ENCODE measurements at regions of chr9 and their contacts with region 1.

Region 1: DNA sequence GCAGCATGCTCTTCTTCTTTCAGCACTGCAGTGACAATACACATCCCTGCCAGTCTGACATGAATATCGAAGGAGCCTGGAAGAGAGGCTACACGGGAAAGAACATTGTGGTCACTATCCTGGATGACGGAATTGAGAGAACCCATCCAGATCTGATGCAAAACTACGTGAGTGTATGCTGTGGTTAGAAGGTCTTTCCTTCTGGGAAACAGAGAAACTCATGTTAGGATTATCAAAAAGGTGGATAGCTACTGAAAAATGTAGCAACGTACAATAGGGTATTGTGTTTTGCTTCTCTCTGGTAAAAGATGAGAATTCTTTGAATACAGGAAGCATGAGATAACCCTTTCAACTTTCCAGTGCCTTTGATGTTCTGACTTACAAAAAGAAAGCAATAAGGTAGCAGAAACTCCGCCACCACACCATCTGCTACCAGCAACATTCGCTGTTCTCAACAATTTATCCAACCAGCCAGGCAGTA is 133.3 kb downstream of the PCSK5 start:
- DNase-seq: no peak
- H3K4me3 ChIP-seq: no peak overlapping the region
- H3K27ac ChIP-seq: no peak overlapping the region
- H3K4me1 ChIP-seq: peaks cover 0 to 4% (median 1%) of the 10 kb centered on the region in 4 donors
- H3K27me3 ChIP-seq: no peaks in the 10 kb centered on the region
- CTCF ChIP-seq: no peak
- EP300 ChIP-seq: no peak
- POLR2A ChIP-seq: no peak

Region 2: GRCh38 chr9:75903785-75904360 is 119.9 kb before region 1 on chr9:
- in situ Hi-C with region 1: loop called in 1 of 4 experiments (anchors 25 kb)
- intact Hi-C with region 1: no loop called
- DNase-seq: peak; percentile 18
- H3K4me3 ChIP-seq: no peak overlapping the region
- H3K27ac ChIP-seq: no peak overlapping the region
- H3K4me1 ChIP-seq: peaks cover 6 to 21% (median 13%) of the 10 kb centered on the region in 4 donors
- H3K27me3 ChIP-seq: no peaks in the 10 kb centered on the region
- CTCF ChIP-seq: no peak
- EP300 ChIP-seq: no peak
- POLR2A ChIP-seq: no peak

Region 3: DNA sequence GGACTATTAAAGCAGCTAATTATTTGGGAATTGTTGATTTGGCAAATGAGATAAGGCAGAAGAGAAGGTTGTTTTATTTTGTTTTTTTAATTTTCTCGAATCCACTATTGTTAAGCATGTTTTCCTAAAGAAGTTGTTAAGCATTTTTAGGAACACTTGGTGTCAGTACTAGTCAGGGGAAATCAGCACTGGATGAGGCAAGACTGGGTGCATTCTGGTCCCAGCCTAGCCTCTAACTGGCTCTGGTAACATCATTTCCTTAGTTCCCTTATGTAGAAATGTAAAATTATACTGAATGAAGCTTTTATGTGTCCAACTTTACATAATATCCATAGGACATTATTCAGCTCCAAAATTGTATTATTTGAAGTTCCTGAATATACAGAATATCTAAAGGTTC is 62.8 kb after region 1 on chr9:
- in situ Hi-C with region 1: no loop called
- intact Hi-C with region 1: no loop called
- DNase-seq: no peak
- H3K4me3 ChIP-seq: no peak overlapping the region
- H3K27ac ChIP-seq: no peak overlapping the region
- H3K4me1 ChIP-seq: no peaks in the 10 kb centered on the region
- H3K27me3 ChIP-seq: no peaks in the 10 kb centered on the region
- CTCF ChIP-seq: no peak
- EP300 ChIP-seq: no peak
- POLR2A ChIP-seq: no peak

Measured in transverse colon (tissue), 4 donors.